Vagina (tissue), 2 donors: ENCODE measurements at regions of chr1 and their contacts with region 1.

Region 1: DNA sequence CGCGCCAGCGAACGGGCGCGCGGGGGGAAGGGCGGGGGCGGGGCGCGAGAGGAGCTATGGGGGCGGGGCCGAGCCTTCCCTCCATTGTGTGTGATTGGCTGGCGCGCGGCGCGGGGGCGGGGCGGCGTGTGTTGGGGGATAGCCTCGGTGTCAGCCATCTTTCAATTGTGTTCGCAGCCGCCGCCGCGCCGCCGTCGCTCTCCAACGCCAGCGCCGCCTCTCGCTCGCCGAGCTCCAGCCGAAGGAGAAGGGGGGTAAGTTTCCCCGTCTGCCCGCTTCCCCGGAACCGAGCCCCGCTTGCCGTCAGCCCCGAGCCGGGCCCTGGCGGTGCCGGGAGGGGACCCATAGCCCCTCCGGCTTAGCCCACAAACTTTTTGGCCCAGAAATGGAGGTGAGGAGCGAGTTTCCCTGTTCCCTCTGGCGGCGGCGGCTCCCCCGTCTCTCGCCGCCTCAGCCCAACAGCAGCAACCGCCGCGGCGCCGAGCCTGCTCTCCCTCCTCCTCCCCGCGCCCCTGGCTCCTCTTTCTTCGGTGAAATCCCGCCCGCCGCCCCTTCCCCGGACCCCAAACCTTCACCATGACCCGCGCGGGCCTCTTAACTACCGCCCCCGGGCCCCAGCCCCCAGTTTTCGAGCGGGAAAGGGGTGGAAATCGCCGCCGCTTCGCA is at the start of gene H3-3A:
- DNase-seq: peak in 1 of 2 donors; percentile 97
- H3K4me3 ChIP-seq: peak within 1 kb of the TSS; percentile 66 to 88
- H3K27ac ChIP-seq: peak within 1 kb of the TSS; percentile 100
- H3K4me1 ChIP-seq: peaks cover 50% of the 10 kb centered on the region
- H3K27me3 ChIP-seq: no peaks in the 10 kb centered on the region
- CTCF ChIP-seq: no peak
- POLR2A ChIP-seq: peak in 1 of 2 donors; percentile 99
- total RNA-seq, gene H3-3A: 263 TPM

Region 2: GRCh38 chr1:226001963-226002666 is 60.6 kb before region 1 on chr1:
- intact Hi-C with region 1: loop called (anchors 5 kb)
- DNase-seq: peak in 1 of 2 donors; percentile 91
- H3K4me3 ChIP-seq: no peak overlapping the region
- H3K27ac ChIP-seq: peak overlapping the region; percentile 54
- H3K4me1 ChIP-seq: peaks cover 28% of the 10 kb centered on the region
- H3K27me3 ChIP-seq: no peaks in the 10 kb centered on the region
- CTCF ChIP-seq: no peak
- POLR2A ChIP-seq: no peak

Region 3: GRCh38 chr1:226121587-226122400 is 59.1 kb after region 1 on chr1:
- intact Hi-C with region 1: loop called (anchors 2 kb)
- DNase-seq: no peak
- H3K4me3 ChIP-seq: peak overlapping the region; percentile 73 to 90
- H3K27ac ChIP-seq: peak overlapping the region; percentile 84
- H3K4me1 ChIP-seq: peaks cover 18% of the 10 kb centered on the region
- H3K27me3 ChIP-seq: no peaks in the 10 kb centered on the region
- CTCF ChIP-seq: peak; percentile 41 to 91 (median 67)
- POLR2A ChIP-seq: no peak

Region 4: GRCh38 chr1:226186124-226187018 is 123.7 kb after region 1 on chr1 and contains the start of gene ACBD3:
- intact Hi-C with region 1: loop called (anchors 10 kb)
- DNase-seq: peak in 1 of 2 donors; percentile 92
- H3K4me3 ChIP-seq: peak within 1 kb of the TSS; percentile 88 to 94
- H3K27ac ChIP-seq: peak within 1 kb of the TSS; percentile 96
- H3K4me1 ChIP-seq: peaks cover 48% of the 10 kb centered on the region
- H3K27me3 ChIP-seq: no peaks in the 10 kb centered on the region
- CTCF ChIP-seq: no peak
- POLR2A ChIP-seq: peak in 1 of 2 donors; percentile 80
- total RNA-seq, gene ACBD3: 38.1 TPM